Esophagus muscularis mucosa (tissue), 4 donors: ENCODE measurements at regions of chr20 and their contacts with region 1.

Region 1: DNA sequence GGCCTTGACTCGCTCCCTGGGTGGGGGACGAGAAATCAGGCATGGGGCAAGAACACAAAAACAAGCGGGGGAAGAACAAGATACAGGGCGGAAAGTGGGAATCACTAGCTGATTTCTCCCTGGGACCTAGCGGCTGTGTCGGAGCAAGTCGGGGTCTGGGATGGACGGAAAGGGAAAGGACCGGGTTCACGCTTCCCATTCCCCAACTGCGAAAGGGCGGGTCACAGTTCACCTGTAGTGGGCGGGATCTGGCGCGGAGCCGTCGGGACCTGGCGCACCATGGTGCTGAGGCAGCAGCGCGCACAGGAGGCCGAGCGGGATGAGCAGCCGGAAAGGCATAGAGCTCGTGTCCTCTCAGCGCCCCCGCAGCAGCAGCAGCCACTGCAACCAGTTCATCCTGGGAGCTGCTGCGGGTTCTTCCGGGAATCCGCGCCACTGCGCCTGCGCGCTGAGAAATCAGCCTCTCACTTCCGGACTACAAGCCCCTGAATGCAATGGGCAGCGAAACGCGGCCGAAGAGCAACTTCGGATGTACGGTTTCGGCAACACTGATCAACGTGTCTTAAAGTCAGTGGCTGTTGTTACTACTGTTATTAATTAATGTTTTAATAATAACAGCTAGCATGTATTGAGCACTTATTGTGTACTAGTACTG is at the start of gene EDEM2:
- DNase-seq: peak; percentile 98
- H3K4me3 ChIP-seq: peak within 1 kb of the TSS; percentile 70 to 83 (median 79)
- H3K27ac ChIP-seq: peak within 1 kb of the TSS; percentile 72 to 87 (median 78)
- H3K4me1 ChIP-seq: peaks cover 12 to 32% (median 30%) of the 10 kb centered on the region in 4 donors
- H3K27me3 ChIP-seq: no peaks in the 10 kb centered on the region
- CTCF ChIP-seq: no peak
- EP300 ChIP-seq: no peak
- POLR2A ChIP-seq: no peak
- total RNA-seq, gene EDEM2: 13.3 to 20.3 (median 14.6) TPM

Region 2: GRCh38 chr20:35269055-35269781 is 122.2 kb after region 1 on chr20:
- intact Hi-C with region 1: loop called (anchors 2 kb)
- DNase-seq: no peak
- H3K4me3 ChIP-seq: no peak overlapping the region
- H3K27ac ChIP-seq: peak overlapping the region in 1 of 4 donors; percentile 16
- H3K4me1 ChIP-seq: peaks cover under 1 to 28% (median 17%) of the 10 kb centered on the region in 4 donors
- H3K27me3 ChIP-seq: no peaks in the 10 kb centered on the region
- CTCF ChIP-seq: peak; percentile 64 to 85 (median 67)
- EP300 ChIP-seq: no peak
- POLR2A ChIP-seq: no peak

Region 3: GRCh38 chr20:35454881-35455609 is 308.0 kb after region 1 on chr20 and contains the start of gene CEP250:
- intact Hi-C with region 1: loop called (anchors 10 kb)
- DNase-seq: peak; percentile 97
- H3K4me3 ChIP-seq: peak within 1 kb of the TSS; percentile 63 to 96 (median 90)
- H3K27ac ChIP-seq: peak within 1 kb of the TSS; percentile 87 to 94 (median 89)
- H3K4me1 ChIP-seq: peaks cover 11 to 26% (median 21%) of the 10 kb centered on the region in 4 donors
- H3K27me3 ChIP-seq: no peaks in the 10 kb centered on the region
- CTCF ChIP-seq: no peak
- EP300 ChIP-seq: no peak
- POLR2A ChIP-seq: no peak
- total RNA-seq, gene CEP250: 17.7 to 35.8 (median 23.7) TPM